Activated CD4-positive, alpha-beta T cell treated with anti-CD3 and anti-CD28 coated beads, Interleukin-2, amount 10 ng/mL, durations not matched to agents 24 days and 14 days (primary cell): ENCODE measurements at regions of chr4 and their contacts with region 1.

Region 1: DNA sequence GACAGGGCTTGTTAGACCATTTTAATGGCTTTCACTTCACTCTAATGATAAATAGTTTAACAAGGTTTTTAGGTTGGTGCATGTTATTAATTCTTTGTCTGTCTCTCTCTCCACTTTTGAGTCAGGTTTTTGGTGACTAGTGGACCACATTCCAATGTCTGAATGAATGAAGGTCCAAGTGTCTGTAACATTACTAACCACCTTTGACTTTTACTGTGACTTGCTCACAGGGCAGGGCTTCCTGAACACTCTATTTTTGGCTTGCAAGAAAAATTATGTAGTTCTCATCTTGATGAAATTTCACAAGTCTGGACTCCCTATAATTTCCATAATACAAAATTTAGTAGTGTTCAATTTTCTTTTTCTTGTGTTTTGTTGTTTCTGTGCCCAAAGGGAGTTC is 78.9 kb upstream of the BMPR1B start:
- DNase-seq: no peak
- H3K4me3 Mint-ChIP-seq: no peak overlapping the region
- H3K27ac Mint-ChIP-seq: no peak overlapping the region
- H3K4me1 Mint-ChIP-seq: no peaks in the 10 kb centered on the region
- H3K27me3 Mint-ChIP-seq: no peaks in the 10 kb centered on the region

Region 2: DNA sequence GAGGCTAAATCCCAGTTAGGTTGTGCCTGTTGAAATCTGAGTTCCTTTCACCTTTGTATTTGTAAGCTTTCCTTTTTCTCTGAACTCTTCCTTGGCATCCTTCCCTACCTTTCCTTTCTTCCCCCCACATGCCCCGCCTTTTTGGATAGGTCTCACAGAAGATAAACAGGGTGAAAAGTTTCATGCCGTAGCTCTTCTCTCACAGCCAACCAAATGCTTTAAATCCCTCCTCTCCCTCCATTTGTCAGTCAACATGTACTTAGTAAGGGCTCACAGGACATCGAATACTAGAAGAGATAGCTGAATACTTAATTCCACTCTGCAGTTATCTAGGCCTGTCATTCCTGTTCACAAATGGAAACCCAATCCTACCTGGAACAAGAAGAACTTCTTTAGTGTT is 28.2 kb before region 1 on chr4:
- intact Hi-C with region 1: loop called (anchors 1 kb)
- DNase-seq: no peak
- H3K4me3 Mint-ChIP-seq: no peak overlapping the region
- H3K27ac Mint-ChIP-seq: no peak overlapping the region
- H3K4me1 Mint-ChIP-seq: no peaks in the 10 kb centered on the region
- H3K27me3 Mint-ChIP-seq: no peaks in the 10 kb centered on the region